PC-3 (cell line): ENCODE measurements at regions of chrX and their contacts with region 1.

Region 1: DNA sequence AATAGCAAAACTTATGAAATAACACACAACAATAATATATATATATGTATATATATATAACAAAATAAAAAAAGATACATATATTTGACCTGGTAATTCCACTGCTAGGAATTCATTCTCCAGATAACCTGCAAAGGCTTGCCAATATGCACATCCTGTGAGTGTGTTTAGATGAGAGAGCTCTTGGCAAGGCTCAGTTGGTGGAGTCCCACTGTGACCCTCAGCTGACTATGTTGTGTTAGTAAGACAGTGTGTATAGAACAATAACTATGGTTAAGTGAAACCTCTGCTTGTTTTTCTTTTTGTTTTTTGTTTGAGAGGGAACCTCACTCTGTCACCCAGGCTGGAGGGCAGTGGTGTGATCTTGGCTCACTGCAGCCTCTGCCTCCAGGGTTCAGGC is 39.5 kb upstream of the RBMX start:
- DNase-seq: no peak
- ATAC-seq: no peak
- H3K4me3 ChIP-seq: no peak overlapping the region
- H3K27ac ChIP-seq: no peak overlapping the region
- H3K4me1 ChIP-seq: no peaks in the 10 kb centered on the region
- H3K27me3 ChIP-seq: no peaks in the 10 kb centered on the region
- CTCF ChIP-seq: no peak

Region 2: DNA sequence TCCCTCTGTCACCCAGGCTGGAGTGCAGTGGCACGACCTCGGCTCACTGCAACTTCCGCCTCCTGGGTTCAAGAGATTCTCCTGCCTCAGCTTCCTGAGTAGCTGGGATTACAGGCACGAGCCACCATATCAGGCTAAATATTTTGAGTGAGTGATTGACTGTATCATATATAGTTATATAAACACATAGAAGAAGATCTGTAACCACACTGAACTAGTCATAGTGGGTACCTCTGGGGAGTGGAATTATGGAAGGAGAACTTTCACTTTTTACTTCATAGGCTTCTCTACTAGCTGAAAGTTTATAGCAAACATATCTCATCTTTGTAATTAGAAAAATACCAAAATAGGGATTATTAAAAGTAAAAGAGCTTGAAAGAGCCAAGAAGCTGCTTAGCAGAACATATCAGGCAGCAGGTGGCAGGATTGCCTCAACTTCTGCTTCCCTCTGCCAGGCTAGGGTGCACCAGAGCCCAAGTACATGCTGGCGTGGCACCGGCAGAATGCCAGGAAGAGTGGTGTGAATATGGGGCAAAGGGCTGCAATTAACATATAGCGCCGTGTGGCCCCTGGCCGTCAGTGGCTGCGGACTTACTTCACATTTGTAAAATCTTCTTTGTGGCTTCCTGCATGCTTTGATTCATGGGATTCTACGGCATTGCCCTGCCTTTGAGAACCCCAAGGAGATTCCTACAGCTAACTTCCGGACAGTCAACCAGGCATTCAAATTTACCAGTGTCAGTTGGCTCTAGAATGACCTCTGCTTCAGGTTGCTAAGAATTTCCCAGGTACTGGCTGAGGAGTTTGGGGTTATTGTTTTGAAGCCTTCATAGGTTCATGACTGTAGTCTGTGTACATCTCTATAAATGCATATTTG is 311.5 kb before region 1 on chrX:
- CTCF ChIA-PET with region 1: no interaction called
- POLR2A ChIA-PET with region 1: no interaction called
- intact Hi-C with region 1: loop called (anchors 10 kb)
- DNase-seq: peak; percentile 57
- ATAC-seq: peak; percentile 81
- H3K4me3 ChIP-seq: no peak overlapping the region
- H3K27ac ChIP-seq: peak overlapping the region; percentile 60; the same call in 1 of the 2 replicates
- H3K4me1 ChIP-seq: peaks cover 26% of the 10 kb centered on the region
- H3K27me3 ChIP-seq: no peaks in the 10 kb centered on the region
- CTCF ChIP-seq: peak; percentile 62

Region 3: DNA sequence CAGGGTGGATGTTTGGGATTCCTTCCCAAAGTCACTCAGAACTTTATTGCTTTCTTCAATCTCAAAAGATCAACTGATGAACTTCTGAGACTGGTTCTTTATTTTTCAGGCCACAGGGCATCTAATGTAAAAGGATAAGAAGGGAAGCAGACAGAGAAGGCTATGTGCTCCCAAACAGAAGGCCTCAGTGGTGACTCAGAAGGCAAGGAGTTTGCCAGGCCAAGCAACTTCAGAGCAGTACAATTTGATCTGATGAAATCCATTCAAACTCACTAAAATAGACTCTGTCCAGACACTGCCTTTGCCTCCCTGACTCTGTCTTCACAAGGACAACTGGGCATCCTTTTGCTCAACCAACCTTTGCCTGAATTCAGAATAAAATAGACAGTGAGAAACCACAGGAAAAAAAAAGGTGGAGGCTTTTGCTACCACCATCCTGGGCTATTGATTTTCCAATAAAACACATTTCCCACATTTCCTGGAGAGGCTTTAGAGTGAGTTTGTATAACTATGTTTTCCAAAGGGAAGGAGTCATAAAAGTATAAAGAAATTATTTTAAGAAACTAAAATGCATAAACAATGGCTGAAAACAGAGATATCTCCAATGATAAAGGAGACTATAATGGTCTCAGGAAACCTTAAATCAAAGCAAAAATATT is 194.4 kb before region 1 on chrX:
- CTCF ChIA-PET with region 1: no interaction called
- POLR2A ChIA-PET with region 1: no interaction called
- intact Hi-C with region 1: loop called (anchors 5 kb)
- DNase-seq: peak; percentile 50
- ATAC-seq: peak; percentile 91
- H3K4me3 ChIP-seq: no peak overlapping the region
- H3K27ac ChIP-seq: 0 out of 2 replicates have a peak overlapping the region, but pooled peaks have one; percentile 18
- H3K4me1 ChIP-seq: peaks cover 14% of the 10 kb centered on the region
- H3K27me3 ChIP-seq: no peaks in the 10 kb centered on the region
- CTCF ChIP-seq: no peak

Region 4: DNA sequence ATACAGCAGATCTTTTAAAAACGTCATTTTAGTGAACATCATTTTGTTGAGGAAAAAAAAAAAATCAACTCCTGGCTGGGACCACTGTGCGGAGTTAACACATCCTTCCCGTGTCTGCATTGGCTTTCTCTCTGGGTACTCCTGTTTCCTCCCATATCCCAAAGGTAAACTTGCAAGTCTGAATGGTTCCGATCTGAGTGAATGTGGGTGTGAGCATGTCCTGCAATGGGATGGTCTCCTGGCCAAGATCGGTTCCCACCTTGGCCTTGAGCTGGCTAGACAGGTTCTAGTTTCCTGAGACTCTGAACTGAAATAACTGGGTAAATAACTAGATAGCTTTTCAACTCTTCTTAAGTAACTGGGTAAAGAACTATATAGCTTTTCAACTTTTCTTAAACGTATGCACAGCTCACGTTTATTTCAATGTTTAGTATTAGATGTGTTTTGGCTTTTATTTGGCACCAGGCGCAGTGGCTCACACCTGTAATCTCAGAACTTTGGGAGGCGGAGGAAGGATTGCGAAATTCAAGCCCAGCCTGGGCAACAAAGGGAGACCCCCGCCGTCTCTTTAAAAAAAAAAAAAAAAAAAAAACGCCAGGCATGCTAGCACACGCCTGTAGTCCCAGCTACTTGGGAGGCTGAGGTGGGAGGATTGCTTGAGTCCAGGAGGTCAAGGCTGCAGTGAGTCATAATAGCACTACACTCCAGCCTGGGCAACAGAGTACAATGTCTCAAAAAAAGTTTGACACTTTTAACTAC is 53.5 kb before region 1 on chrX:
- CTCF ChIA-PET with region 1: no interaction called
- POLR2A ChIA-PET with region 1: no interaction called
- intact Hi-C with region 1: loop called (anchors 5 kb)
- DNase-seq: no peak
- ATAC-seq: no peak
- H3K4me3 ChIP-seq: no peak overlapping the region
- H3K27ac ChIP-seq: no peak overlapping the region
- H3K4me1 ChIP-seq: no peaks in the 10 kb centered on the region
- H3K27me3 ChIP-seq: no peaks in the 10 kb centered on the region
- CTCF ChIP-seq: no peak

Region 5: GRCh38 chrX:137143864-137144263 is 223.9 kb after region 1 on chrX:
- CTCF ChIA-PET with region 1: no interaction called
- POLR2A ChIA-PET with region 1: no interaction called
- intact Hi-C with region 1: no loop called
- DNase-seq: no peak
- ATAC-seq: no peak
- H3K4me3 ChIP-seq: no peak overlapping the region
- H3K27ac ChIP-seq: no peak overlapping the region
- H3K4me1 ChIP-seq: no peaks in the 10 kb centered on the region
- H3K27me3 ChIP-seq: no peaks in the 10 kb centered on the region
- CTCF ChIP-seq: no peak

Region 6: GRCh38 chrX:137405449-137406140 is 485.6 kb after region 1 on chrX:
- CTCF ChIA-PET with region 1: no interaction called
- POLR2A ChIA-PET with region 1: no interaction called
- intact Hi-C with region 1: no loop called
- DNase-seq: no peak
- ATAC-seq: no peak
- H3K4me3 ChIP-seq: no peak overlapping the region
- H3K27ac ChIP-seq: no peak overlapping the region
- H3K4me1 ChIP-seq: no peaks in the 10 kb centered on the region
- H3K27me3 ChIP-seq: no peaks in the 10 kb centered on the region
- CTCF ChIP-seq: no peak